CD8-positive, alpha-beta memory T cell (primary cell): ENCODE measurements at regions of chr14 and their contacts with region 1.

Region 1: GRCh38 chr14:61837336-61838229 is 75.4 kb downstream of the SNAPC1 start:
- DNase-seq: peak; percentile 55 to 81 (median 60)
- H3K4me3 ChIP-seq: no peak overlapping the region
- H3K4me3 Mint-ChIP-seq: no peak overlapping the region
- H3K27ac ChIP-seq: no peak overlapping the region
- H3K27ac Mint-ChIP-seq: no peak overlapping the region
- H3K4me1 ChIP-seq: no peaks in the 10 kb centered on the region
- H3K4me1 Mint-ChIP-seq: peaks cover 0 to 4% (median 0%) of the 10 kb centered on the region in 3 donors
- H3K27me3 ChIP-seq: no peaks in the 10 kb centered on the region
- H3K27me3 Mint-ChIP-seq: peaks cover 9 to 24% of the 10 kb centered on the region in 2 donors

Region 2: DNA sequence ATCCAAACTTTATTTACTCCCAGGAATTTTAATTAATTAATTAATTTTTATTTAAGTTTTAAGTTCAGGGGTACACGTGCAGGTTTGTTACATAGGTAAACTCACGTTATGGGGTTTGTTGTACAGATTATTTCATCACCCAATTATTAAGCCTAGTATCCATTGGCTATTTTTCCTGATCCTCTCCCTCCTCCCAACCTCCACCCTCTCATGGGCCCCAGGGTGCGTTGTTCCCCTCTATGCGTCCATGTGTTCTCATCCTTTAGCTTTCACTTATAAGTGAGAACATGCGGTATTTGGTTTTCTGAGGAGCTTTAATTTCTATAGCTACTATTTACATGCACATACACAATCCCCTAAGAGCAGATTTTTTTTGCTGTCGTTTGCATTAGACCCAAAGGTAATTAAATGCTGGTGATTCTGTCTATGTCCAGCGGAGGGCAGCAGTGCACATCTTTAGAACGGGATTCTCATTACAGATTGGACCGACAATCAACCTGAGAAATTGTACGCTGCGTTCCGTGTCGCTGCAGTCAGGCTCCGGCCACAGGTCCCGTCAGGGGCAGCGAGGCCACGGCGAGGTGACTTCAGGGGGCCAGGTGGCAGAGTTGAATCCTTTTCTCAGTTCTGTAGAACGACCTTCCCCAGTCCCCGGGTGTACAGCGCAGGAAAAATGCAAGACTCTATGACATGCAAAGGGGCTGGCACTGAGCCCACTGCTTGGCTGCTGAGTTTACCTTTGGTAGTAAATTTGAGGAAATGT is 568.1 kb before region 1 on chr14:
- CTCF ChIA-PET with region 1: interaction called, 27 read pairs
- POLR2A ChIA-PET with region 1: no interaction called
- DNase-seq: peak; percentile 54 to 82 (median 65)
- H3K4me3 ChIP-seq: peak overlapping the region; percentile 29
- H3K4me3 Mint-ChIP-seq: peak overlapping the region in 6 of 7 donors; percentile 55 to 83 (median 77)
- H3K27ac ChIP-seq: no peak overlapping the region
- H3K27ac Mint-ChIP-seq: peak overlapping the region in 1 of 8 donors; percentile 53
- H3K4me1 ChIP-seq: peaks cover 5% of the 10 kb centered on the region
- H3K4me1 Mint-ChIP-seq: peaks cover 0 to 7% (median 4%) of the 10 kb centered on the region in 3 donors
- H3K27me3 ChIP-seq: peaks cover 4% of the 10 kb centered on the region
- H3K27me3 Mint-ChIP-seq: peaks cover 29 to 60% of the 10 kb centered on the region in 2 donors

Region 3: DNA sequence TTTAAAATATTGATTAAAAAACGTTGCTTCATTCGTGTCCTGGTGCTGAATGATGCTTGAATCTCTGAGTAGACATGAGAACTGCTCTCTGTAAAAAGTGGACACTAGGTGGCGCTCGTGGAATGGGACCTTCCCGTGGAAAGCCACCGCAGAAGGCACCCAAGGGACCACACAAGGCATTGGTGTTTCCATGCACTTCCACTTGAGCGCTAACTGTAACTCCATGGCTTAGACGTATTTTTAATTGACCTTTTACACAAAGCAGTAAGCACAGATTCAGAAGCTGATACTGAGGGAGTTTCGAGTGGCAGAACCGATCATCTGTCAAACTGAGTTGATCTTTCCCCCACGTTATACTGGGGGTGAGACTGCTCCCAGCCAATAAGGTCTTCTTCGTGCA is 380.9 kb before region 1 on chr14:
- CTCF ChIA-PET with region 1: interaction called, 10 read pairs
- POLR2A ChIA-PET with region 1: no interaction called
- DNase-seq: peak; percentile 72 to 87 (median 77)
- H3K4me3 ChIP-seq: no peak overlapping the region
- H3K4me3 Mint-ChIP-seq: peak overlapping the region in 2 of 7 donors; percentile 34 to 64
- H3K27ac ChIP-seq: no peak overlapping the region
- H3K27ac Mint-ChIP-seq: peak overlapping the region; percentile 81 to 94 (median 91)
- H3K4me1 ChIP-seq: peaks cover 64% of the 10 kb centered on the region
- H3K4me1 Mint-ChIP-seq: peaks cover 80 to 93% (median 87%) of the 10 kb centered on the region in 3 donors
- H3K27me3 ChIP-seq: no peaks in the 10 kb centered on the region
- H3K27me3 Mint-ChIP-seq: peaks cover 0 to 11% of the 10 kb centered on the region in 2 donors

Region 4: DNA sequence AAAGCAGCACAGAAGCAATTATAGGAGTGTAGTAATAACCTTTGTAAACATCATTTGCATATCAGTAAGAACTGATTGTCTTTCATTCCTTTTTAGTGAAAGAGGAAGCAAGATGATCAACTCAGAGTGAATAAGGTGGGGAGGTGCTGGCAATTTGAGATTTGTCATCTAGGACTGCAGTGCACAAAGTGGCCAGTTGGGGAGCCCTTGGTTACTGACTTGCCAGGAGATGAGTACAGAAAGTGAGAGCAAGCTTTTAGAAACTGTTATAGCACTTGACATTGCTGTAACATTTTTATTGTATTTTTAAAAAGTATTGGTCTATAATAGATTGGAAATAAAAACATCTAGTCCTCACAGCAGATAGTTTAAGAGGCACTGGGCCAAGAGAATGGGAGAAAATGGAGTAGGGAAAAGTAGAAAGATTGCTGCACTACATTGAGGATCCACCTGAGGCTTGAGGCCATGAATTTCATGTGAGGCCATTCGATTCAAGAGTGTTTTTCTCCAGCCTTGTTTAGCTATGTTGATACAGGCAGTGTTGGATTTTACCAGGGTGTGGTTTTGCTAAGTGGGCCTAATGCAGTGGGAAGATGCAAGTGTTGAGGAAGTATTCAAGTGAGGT is 22.8 kb after region 1 on chr14:
- CTCF ChIA-PET with region 1: no interaction called
- POLR2A ChIA-PET with region 1: no interaction called
- DNase-seq: peak; percentile 15 to 64 (median 26)
- H3K4me3 ChIP-seq: no peak overlapping the region
- H3K4me3 Mint-ChIP-seq: no peak overlapping the region
- H3K27ac ChIP-seq: no peak overlapping the region
- H3K27ac Mint-ChIP-seq: no peak overlapping the region
- H3K4me1 ChIP-seq: no peaks in the 10 kb centered on the region
- H3K4me1 Mint-ChIP-seq: peaks cover 0 to 2% (median 0%) of the 10 kb centered on the region in 3 donors
- H3K27me3 ChIP-seq: no peaks in the 10 kb centered on the region
- H3K27me3 Mint-ChIP-seq: peaks cover 10 to 23% of the 10 kb centered on the region in 2 donors